Activated CD4-positive, alpha-beta T cell treated with anti-CD3 and anti-CD28 coated beads, Interleukin-2, amount 10 ng/mL, durations not matched to agents 7 days and 5 days (primary cell): ENCODE measurements at regions of chr19 and their contacts with region 1.

Region 1: GRCh38 chr19:8444645-8445487 is at the start of gene HNRNPM:
- DNase-seq: peak; percentile 100
- H3K4me3 Mint-ChIP-seq: peak within 1 kb of the TSS; percentile 91
- H3K27ac Mint-ChIP-seq: peak within 1 kb of the TSS; percentile 97
- H3K4me1 Mint-ChIP-seq: peaks cover 40% of the 10 kb centered on the region
- H3K27me3 Mint-ChIP-seq: no peaks in the 10 kb centered on the region
- total RNA-seq, gene HNRNPM: 248 to 265 TPM

Region 2: GRCh38 chr19:7903244-7904073 is 541.4 kb before region 1 on chr19 and contains the start of gene MAP2K7:
- CTCF ChIA-PET with region 1: no interaction called
- POLR2A ChIA-PET with region 1: interaction called, 12 read pairs
- DNase-seq: peak; percentile 100
- H3K4me3 Mint-ChIP-seq: peak within 1 kb of the TSS; percentile 81
- H3K27ac Mint-ChIP-seq: peak within 1 kb of the TSS; percentile 94
- H3K4me1 Mint-ChIP-seq: peaks cover 29% of the 10 kb centered on the region
- H3K27me3 Mint-ChIP-seq: no peaks in the 10 kb centered on the region
- total RNA-seq, gene MAP2K7: 44.1 to 45.6 TPM

Region 3: DNA sequence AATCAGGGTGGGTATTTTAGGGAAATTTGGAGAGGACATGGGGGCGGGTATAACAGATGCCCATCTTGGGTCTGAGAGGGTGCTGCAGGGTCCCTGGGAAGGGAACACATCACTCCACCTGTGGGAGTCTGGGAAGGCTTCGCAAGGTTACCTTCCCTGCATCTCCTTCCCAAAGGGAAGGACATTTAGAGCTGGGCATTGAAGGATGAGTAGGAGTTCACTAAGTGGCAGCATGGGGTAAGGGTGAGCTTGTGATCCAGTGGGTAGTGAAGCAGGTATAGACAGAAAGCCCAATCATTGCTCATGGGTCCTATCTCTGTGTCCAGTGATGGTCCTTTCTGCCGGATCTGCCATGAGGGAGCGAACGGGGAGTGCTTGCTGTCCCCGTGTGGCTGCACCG is 18.6 kb before region 1 on chr19:
- CTCF ChIA-PET with region 1: interaction called, 15 read pairs
- POLR2A ChIA-PET with region 1: no interaction called
- DNase-seq: no peak
- H3K4me3 Mint-ChIP-seq: no peak overlapping the region
- H3K27ac Mint-ChIP-seq: no peak overlapping the region
- H3K4me1 Mint-ChIP-seq: no peaks in the 10 kb centered on the region
- H3K27me3 Mint-ChIP-seq: no peaks in the 10 kb centered on the region

Region 4: DNA sequence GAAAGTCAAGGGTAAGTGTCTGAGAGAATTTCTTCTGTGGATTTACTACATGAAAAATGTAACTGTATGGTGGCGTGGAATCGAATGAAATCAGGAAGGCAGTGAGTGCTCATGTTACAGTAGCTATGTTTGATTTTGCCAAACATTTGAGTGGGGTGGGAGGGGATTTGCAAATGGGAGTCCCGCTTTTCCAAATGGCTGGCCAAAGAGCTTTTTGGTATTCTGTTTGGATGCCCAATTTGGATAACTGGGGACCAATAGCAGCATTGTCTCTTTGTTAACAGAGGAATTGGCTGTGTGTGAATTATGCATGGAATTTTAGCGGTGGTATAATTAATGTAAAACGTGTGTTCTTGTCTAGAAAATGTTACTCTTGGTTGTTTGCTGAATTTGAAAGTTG is 17.7 kb after region 1 on chr19:
- CTCF ChIA-PET with region 1: interaction called, 19 read pairs
- POLR2A ChIA-PET with region 1: interaction called, 6 read pairs
- DNase-seq: no peak
- H3K4me3 Mint-ChIP-seq: no peak overlapping the region
- H3K27ac Mint-ChIP-seq: no peak overlapping the region
- H3K4me1 Mint-ChIP-seq: peaks cover 36% of the 10 kb centered on the region
- H3K27me3 Mint-ChIP-seq: no peaks in the 10 kb centered on the region